Left ventricle myocardium inferior (tissue), 1 donor: ENCODE measurements at regions of chr10 and their contacts with region 1.

Region 1: GRCh38 chr10:68301790-68302502 is 29.9 kb upstream of the HNRNPH3 start:
- DNase-seq: no peak
- H3K4me3 ChIP-seq: no peak overlapping the region
- H3K27ac ChIP-seq: no peak overlapping the region
- H3K4me1 ChIP-seq: peaks cover 6% of the 10 kb centered on the region
- H3K27me3 ChIP-seq: no peaks in the 10 kb centered on the region
- CTCF ChIP-seq: peak; percentile 70

Region 2: DNA sequence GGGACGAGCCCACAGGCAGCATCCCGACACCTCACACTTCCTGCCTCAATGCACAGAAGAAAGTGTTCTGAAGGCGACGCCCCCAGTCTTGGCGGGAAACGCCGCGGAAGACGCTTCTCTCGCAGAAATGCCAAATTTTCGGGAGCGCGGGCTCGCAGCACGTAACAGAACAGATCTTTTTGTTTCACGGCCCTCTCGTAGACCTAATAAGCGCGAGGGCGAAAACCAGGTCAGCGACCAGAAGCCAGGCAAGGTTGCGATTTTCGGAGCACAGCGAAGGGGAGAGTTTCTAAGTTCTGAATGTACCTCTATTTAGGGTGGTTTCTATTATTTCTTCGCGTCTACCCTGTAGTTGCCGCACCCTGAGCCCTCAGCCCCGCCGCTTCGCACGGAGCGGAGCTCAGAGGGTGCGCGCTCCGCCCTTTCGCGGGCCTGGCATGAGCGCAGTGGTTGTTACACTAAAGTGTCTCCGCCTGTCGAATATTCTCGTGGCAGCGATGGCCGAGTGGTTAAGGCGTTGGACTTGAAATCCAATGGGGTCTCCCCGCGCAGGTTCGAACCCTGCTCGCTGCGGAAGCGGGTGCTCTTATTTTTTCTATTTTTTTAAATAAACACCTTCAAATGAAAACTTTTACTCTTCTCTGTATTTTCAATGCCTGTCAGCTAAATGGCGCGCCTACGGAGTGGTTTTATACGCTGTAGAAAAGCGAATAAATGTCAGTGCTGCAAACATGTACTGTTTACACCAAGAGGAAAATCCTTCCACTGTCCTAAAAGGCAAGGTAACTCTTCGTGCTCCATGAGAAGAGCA is 537.7 kb before region 1 on chr10:
- intact Hi-C with region 1: no loop called
- DNase-seq: peak; percentile 91
- H3K4me3 ChIP-seq: peak overlapping the region; percentile 81
- H3K27ac ChIP-seq: peak overlapping the region; percentile 97
- H3K4me1 ChIP-seq: peaks cover 17% of the 10 kb centered on the region
- H3K27me3 ChIP-seq: no peaks in the 10 kb centered on the region
- CTCF ChIP-seq: no peak

Region 3: DNA sequence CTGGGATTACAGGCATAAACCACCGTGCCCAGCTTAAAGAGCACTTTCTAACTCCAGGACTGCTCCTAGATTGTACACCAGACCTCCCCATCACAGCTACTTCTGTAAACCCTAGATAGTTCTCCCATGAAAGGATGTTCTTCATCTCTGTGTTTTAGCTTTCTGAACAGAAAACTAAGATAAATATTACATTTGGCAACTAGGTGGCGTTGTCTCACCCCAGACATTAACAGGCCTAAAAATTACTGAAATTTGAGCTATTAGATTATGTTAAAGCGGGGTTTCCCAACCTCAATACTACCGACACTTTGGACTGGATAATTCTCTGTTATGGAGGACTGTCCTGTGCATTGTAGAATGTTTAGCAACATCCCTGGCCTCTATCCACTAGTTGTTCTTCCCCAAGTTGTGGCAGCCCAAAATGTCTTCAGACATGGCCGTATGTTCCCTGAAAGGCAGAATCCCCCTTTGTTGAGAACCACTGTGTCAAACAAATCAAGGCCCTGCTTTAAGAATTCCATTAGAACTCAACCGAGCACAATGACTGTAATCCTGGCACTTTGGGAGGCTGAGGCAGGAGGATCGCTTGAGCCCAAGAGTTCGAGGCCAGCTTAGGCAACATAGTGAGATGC is 89.1 kb before region 1 on chr10:
- intact Hi-C with region 1: loop called (anchors 10 kb)
- DNase-seq: no peak
- H3K4me3 ChIP-seq: no peak overlapping the region
- H3K27ac ChIP-seq: no peak overlapping the region
- H3K4me1 ChIP-seq: no peaks in the 10 kb centered on the region
- H3K27me3 ChIP-seq: no peaks in the 10 kb centered on the region
- CTCF ChIP-seq: peak; percentile 58

Region 4: DNA sequence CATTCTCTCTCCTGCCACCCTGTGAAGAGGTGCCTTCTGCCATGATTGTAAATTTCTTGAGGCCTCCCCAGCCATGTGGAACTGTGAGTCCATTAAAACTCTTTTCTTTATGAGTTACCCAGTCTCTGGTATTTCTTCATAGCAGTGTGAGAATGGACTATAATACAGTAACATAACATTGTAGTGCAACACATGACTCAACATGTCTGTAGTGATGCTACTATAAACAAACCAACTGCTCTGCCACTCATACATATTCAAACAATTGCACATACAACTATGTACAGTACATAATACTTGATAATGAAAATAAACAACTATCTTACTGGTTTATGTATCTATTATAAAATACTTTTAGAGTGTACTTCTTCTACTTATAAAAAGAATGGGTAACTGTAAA is 77.1 kb before region 1 on chr10:
- intact Hi-C with region 1: no loop called
- DNase-seq: no peak
- H3K4me3 ChIP-seq: no peak overlapping the region
- H3K27ac ChIP-seq: no peak overlapping the region
- H3K4me1 ChIP-seq: no peaks in the 10 kb centered on the region
- H3K27me3 ChIP-seq: peaks cover 8% of the 10 kb centered on the region
- CTCF ChIP-seq: no peak

Region 5: DNA sequence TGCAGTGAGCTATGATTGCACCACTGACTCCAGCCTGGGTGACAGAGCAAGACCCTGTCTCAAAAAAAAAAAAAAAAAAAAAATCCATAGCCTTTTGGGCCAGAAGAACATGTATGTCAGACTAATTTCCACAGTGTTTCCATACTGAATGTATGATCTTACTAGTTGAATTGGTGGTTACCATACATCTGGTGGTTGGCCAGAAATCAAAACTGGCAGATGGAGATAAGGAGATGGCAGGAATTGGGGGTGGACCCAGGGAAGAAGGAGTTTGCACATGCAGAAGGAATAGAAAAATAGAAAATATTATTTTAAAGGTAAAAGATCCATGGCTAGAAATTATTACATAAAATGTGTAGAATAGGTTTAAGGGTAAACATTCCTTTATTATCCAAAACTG is 66.4 kb before region 1 on chr10:
- intact Hi-C with region 1: no loop called
- DNase-seq: no peak
- H3K4me3 ChIP-seq: no peak overlapping the region
- H3K27ac ChIP-seq: no peak overlapping the region
- H3K4me1 ChIP-seq: peaks cover 7% of the 10 kb centered on the region
- H3K27me3 ChIP-seq: no peaks in the 10 kb centered on the region
- CTCF ChIP-seq: no peak